Posterior cingulate gyrus (tissue), 11 donors: ENCODE measurements at regions of chr2 and their contacts with region 1.

Region 1: GRCh38 chr2:102753563-102754159 is 8.2 kb upstream of the TMEM182 start:
- DNase-seq: peak in 4 of 10 donors; percentile 17 to 39 (median 19)

Region 2: DNA sequence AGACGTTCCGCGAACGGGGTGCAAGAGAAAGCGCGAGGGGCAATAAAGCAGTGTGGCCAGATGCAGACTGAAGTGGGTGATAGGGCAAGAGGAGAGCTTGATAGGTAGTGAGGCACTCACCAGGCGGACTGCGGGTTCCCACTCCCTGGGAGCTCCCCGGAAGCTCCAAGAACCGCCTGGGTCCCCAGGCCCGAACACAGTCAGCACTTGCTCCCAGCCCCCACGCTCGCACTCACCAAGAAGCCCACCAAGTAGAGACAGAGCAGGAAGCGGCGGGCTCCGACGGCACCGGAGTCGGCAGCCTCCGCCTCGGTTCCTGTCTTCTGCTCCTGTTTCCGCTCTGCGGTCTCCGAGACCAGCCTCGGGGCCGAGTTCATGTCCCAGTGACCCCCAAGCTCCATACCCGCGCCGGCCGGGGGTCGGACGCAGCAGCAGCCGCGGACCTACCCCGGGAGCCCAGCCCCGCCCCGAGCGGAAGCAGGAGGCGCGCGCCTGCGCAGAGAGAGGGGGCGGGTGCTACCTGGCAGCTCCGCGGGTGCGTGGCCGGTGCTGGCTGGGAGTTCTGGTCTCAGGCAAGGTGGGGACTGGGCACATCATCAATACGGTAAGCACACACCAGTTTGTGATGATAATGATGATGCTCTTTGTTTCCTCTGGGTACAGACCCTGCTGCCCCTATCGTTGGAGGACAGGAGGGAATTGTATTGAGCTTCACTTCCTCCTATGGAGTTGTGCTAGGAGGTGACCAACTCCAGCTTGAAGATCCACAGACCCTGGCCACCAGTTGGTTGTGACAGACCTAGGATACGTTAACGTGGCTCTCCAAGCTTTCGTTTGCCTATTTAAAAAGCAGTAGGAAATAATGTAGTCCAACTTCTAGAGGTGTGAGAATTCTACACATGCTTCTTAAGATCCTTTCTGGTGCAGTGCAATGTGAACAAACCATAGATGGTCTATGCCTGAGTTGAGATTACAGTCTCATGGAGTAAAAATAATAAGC is 17.0 kb before region 1 on chr2:
- intact Hi-C with region 1: no loop called
- DNase-seq: peak; percentile 55 to 97 (median 78)

Region 3: GRCh38 chr2:102806250-102806837 is 52.7 kb after region 1 on chr2:
- intact Hi-C with region 1: loop called (anchors 2 kb)
- DNase-seq: peak; percentile 34 to 92 (median 64)